Common myeloid progenitor, CD34-positive (primary cell): ENCODE measurements at regions of chr7 and their contacts with region 1.

Region 1: DNA sequence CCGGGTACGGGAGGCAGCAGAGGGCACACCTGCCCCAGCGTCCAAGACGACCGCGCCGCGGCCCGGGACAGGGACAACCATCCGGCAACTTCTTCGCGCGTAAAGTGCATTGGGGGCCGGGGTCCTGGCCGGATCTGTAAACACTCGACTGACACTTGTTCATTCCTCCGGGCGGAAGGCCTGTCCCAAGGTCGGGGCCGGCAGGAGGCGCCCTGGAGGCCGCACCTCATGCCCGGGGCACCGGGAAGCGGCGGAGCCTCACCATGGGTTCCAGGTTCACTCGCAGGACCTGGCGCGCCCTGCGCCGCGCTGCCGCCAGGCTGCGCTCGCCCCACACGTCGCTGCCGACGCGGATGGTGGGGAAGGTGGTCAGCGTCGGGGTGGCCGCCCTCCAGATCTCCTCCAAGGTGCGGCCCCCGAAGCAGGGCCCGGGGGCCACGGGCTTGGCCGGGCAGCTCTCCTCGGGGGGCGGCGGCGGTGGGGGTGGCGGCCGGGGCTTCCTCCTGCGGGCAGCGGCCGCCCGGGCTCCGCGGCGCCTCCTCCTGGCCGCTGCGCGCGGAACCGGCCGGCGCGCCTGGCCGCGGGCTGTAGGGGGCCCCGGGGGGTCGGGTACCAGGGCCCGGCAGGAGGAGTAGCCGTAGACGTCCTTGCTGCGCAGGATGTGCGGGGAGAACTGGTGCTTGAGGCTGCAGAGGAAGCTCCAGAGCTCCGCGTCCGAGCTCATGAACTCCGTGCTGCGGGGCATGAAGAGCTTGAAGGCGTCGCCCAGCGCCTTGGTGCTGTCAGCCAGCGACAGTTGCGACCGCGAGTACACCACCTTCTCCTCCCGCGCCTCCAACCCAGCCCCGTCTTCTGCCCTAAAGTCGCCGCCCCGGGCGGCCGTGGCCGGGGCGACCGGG is 746 bp downstream of the CCDC71L start:
- DNase-seq: peak; percentile 88 to 90 (median 89)
- H3K4me3 ChIP-seq: peak overlapping the region; percentile 82 to 97 (median 91)
- H3K27ac ChIP-seq: peak overlapping the region; percentile 55 to 87
- H3K4me1 ChIP-seq: peaks cover 13 to 25% (median 19%) of the 10 kb centered on the region in 4 experiments
- H3K27me3 ChIP-seq: no peaks in the 10 kb centered on the region

Region 2: DNA sequence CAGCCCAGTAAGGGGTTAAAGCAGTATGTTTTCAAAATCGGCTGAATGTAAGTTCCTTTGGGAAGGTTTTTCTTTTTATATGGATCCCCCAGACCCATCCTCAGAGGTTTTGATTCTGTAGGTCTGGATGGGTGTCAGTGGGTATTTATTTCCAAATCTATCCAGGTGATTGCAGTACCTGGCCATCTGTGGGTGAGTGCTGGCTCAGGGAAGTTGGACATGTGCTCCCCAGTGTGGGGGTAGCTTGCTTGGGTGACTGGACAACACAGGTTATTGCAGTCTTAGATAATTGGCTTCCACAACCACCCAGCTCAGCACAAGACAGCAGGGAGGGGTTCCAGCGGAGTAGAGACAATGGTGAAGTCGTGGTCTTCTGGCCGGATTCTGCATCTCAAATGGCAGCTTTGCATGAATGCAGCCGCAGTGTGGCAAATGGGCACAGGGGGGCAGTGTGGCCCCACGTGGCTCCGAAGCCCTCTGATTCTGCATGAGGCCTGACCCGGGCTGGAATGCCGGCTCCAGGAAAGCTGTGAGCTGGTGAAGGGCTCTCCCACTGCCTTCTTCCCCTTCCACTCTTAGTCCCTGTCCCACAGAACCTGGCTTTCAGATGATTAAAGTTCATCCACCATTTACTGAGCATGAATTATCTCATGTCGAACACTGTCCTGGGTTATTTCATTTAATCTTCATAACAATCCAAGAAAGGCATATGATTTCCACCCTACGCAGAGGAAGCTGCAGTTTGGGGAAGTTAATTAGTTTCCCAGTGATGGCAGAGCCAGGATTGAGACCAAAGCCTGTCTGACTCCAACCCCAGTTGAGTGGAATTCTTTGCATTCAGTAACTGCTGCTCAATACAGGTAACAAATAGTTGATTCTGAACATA is 483.6 kb before region 1 on chr7:
- CTCF ChIA-PET with region 1: interaction called, 12 read pairs
- POLR2A ChIA-PET with region 1: no interaction called
- DNase-seq: peak; percentile 54 to 71 (median 62)
- H3K4me3 ChIP-seq: no peak overlapping the region
- H3K27ac ChIP-seq: no peak overlapping the region
- H3K4me1 ChIP-seq: peaks cover 0 to 3% (median 0%) of the 10 kb centered on the region in 4 experiments
- H3K27me3 ChIP-seq: peaks cover 0 to 6% (median 3%) of the 10 kb centered on the region in 5 experiments

Region 3: DNA sequence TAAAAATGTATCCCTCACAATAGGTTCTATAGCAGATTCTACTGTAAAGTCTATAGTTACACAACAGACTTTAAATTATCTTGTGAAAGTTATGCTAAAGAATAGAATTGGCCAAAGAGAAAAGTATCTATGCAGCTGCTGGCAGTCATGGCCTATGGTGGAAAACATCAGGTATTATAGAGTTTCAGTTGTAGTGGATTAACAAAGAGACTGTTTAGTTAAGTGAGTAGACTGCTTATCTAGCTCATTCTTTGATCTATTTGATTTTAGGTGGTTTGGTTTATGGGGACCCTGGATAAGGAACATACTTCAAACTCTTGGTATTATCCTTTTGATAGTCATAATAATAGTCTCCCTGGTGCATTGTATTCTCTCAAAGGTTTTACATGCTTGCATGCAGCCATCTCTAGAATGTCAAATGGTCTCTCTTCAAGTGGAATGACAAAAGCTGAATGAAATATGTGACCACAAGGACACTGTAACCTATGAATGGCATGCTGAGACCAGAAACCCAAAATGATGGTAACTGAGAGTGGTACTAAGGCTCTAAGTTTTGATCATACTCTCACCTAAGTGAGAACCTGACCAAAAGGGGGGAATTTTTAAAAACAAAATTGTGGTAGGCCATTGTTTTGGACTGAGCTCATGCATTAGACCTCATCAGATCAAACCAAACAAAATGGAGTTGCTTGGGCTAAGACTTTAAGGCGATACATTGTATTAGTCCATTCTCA is 320.5 kb before region 1 on chr7:
- CTCF ChIA-PET with region 1: no interaction called
- POLR2A ChIA-PET with region 1: no interaction called
- DNase-seq: no peak
- H3K4me3 ChIP-seq: no peak overlapping the region
- H3K27ac ChIP-seq: no peak overlapping the region
- H3K4me1 ChIP-seq: no peaks in the 10 kb centered on the region
- H3K27me3 ChIP-seq: no peaks in the 10 kb centered on the region

Region 4: DNA sequence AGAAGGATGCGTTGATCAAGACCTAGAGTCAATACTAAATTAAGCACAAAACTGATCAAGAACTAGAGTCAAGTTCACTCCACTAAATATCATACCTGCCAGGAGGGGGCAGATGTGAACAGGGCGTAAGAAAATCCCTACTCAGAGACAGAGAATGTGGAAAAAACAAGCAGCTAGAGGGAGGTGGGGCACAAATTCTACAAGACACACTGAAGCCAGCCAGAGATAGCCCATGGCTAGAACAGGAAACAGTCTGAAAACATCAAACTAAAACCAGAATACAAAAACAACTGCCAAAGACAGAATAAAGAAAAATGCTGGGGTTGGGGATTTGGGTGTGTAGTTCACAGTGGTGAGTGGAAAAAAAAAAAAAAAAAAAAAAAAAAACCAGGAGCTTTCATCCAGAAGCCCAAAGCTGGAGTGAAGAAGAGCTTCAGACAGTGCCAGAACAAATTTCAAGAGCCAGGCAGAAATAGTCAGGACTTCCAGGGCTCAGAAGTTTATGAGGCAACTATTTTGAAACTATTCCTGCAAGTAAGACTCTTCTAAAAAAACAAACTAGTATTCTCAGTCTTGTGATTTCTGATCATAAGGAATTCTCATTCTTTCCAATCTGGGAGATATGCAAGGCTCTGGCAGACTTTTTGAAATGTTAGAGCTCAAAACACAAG is 117.5 kb before region 1 on chr7:
- CTCF ChIA-PET with region 1: interaction called, 13 read pairs
- POLR2A ChIA-PET with region 1: no interaction called
- DNase-seq: peak; percentile 81 to 90 (median 88)
- H3K4me3 ChIP-seq: no peak overlapping the region
- H3K27ac ChIP-seq: no peak overlapping the region
- H3K4me1 ChIP-seq: peaks cover 0 to 8% (median 0%) of the 10 kb centered on the region in 4 experiments
- H3K27me3 ChIP-seq: no peaks in the 10 kb centered on the region

Region 5: GRCh38 chr7:106717955-106718871 is 58.0 kb after region 1 on chr7:
- CTCF ChIA-PET with region 1: interaction called, 28 read pairs
- POLR2A ChIA-PET with region 1: no interaction called
- DNase-seq: peak; percentile 94 to 99 (median 98)
- H3K4me3 ChIP-seq: peak overlapping the region in 4 of 7 experiments; percentile 10 to 51 (median 48)
- H3K27ac ChIP-seq: peak overlapping the region; percentile 57 to 86
- H3K4me1 ChIP-seq: peaks cover 31 to 62% (median 40%) of the 10 kb centered on the region in 4 experiments
- H3K27me3 ChIP-seq: no peaks in the 10 kb centered on the region

Region 6: DNA sequence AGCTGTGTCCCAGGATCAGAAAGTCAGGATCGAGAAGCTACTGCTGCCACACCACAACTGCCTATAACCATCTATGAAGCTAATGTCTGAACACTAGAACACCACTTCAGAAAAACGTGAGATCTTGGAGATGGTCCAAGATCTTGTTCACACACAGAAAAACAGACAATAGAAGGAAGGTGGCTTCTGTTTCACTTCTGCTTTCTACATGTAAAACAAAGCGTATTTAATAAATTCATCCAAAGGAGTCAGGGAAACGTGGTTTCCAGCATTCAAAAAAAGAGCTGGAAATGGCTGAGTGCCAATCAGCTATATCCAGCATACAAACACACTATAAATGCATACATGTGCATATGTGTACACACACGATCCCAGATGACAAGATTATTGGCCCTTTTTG is 71.0 kb after region 1 on chr7:
- CTCF ChIA-PET with region 1: interaction called, 93 read pairs
- POLR2A ChIA-PET with region 1: interaction called, 5 read pairs
- DNase-seq: peak; percentile 67 to 92 (median 91)
- H3K4me3 ChIP-seq: peak overlapping the region in 5 of 7 experiments; percentile 5 to 59 (median 29)
- H3K27ac ChIP-seq: no peak overlapping the region
- H3K4me1 ChIP-seq: peaks cover 14 to 27% (median 21%) of the 10 kb centered on the region in 4 experiments
- H3K27me3 ChIP-seq: no peaks in the 10 kb centered on the region

Region 7: GRCh38 chr7:106736508-106737201 is 76.4 kb after region 1 on chr7:
- CTCF ChIA-PET with region 1: interaction called, 93 read pairs
- POLR2A ChIA-PET with region 1: interaction called, 5 read pairs
- DNase-seq: peak; percentile 80
- H3K4me3 ChIP-seq: peak overlapping the region in 4 of 7 experiments; percentile 37 to 73 (median 48)
- H3K27ac ChIP-seq: no peak overlapping the region
- H3K4me1 ChIP-seq: peaks cover 7 to 14% (median 10%) of the 10 kb centered on the region in 4 experiments
- H3K27me3 ChIP-seq: no peaks in the 10 kb centered on the region

Region 8: DNA sequence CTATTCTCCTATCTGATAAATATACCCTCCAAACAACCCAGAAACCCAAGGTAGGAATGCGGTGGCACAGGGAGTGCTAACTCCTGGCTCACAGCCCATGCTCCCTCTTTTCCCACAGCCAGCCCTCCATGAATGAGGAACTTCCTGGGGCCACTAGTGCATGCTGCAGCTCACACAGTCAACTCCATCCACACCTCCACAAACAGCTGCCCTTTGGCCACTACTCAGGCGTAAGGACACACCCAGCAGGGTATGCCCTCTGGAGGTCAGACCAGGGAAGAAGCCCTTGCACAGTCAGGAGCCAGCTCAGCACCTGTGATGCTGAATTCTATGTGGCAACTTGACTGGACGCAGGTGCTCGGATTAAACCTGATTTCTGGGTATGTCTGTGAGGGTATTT is 119.7 kb after region 1 on chr7:
- CTCF ChIA-PET with region 1: interaction called, 11 read pairs
- POLR2A ChIA-PET with region 1: no interaction called
- DNase-seq: peak in 2 of 3 donors; percentile 16 to 28
- H3K4me3 ChIP-seq: no peak overlapping the region
- H3K27ac ChIP-seq: no peak overlapping the region
- H3K4me1 ChIP-seq: peaks cover 0 to 3% (median 0%) of the 10 kb centered on the region in 4 experiments
- H3K27me3 ChIP-seq: no peaks in the 10 kb centered on the region